Common myeloid progenitor, CD34-positive (primary cell): ENCODE measurements at regions of chr1 and their contacts with region 1.

Region 1: DNA sequence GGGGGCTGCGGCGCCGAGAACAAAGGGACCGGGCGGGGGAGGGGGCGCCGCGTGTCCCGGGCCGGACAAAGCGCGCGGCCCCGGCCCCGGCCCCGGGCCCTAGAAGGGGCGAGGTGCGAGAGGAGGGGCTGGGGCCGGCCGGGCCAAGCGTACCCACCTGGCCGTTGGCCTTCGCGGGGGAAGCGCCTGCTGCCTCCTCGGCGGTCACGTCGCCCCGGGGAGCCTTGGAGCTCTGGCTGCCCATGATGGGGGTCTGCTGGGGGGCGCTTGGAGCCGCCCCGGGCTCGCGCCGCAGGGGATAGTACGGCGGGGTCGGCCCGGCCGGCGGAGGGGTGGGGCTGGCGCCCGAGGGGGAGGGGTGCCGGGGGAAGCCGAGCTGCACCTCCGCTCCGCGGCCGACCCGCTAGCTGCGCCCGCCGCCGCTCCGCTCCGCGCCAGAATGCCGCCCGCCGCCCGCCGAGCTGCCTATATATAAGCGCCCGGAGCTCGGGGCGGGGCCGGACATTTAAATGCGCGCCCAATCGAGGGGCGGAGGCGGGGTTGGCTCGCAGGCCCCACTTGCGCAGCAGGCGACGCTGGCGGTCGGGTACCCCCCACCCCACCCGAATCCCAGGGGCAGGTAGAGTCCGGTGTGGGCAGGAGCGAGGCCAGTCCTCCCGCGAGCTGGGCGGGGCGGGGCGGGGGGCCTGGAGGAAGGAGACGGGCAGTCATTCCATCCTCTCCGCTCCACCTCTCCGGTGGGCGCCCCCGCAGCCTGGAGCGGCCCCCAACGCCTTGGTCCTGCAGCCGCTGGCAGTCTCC is at the start of gene MARCKSL1:
- DNase-seq: peak; percentile 72 to 83 (median 79)
- H3K4me3 ChIP-seq: peak within 1 kb of the TSS; percentile 33 to 80 (median 66)
- H3K27ac ChIP-seq: peak within 1 kb of the TSS in 1 of 2 experiments; percentile 20
- H3K4me1 ChIP-seq: peaks cover 0 to 54% (median 51%) of the 10 kb centered on the region in 4 experiments
- H3K27me3 ChIP-seq: peaks cover 0 to 5% (median 0%) of the 10 kb centered on the region in 5 experiments

Region 2: DNA sequence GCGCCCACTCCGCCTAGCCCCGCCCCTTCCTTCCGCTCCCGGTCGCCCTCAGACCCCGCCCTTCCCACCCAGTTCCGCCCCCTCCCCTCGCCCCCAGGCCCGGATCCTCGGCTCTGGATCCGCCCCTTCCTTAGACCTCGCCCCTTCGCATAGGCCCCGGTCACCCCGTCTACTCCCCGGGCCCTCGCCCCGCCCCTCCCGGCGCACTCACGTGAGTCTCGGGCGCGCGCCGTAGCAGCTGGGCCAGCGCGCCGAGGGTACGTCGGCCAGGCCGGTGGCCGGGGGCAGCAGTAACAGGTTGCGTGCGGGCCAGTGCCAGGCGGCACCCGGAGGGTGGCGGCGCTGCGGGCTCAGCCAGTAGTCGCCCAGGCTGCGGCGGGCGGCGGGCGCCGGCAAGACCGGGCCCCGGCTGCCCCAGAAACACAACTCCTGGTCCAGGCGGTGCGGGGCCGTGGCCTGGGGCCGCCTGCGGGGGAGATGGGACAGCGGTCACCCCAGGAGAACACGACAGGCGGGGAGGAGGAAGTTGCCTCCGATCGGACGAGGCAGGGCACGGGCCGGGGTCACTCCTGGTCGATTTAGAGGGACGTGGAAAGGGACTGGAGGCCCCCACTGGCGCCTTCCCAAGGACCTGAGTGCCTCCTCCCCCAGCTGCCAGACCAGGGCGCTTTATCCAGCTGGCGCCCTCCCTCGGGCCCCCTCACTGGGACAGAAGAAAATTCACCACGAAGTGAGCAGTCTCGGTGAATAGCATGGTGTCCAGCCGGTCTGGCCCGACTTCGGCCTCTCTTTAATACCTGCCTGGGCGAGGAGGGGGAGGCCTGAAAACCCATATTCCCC is 15.6 kb after region 1 on chr1:
- CTCF ChIA-PET with region 1: interaction called, 29 read pairs
- POLR2A ChIA-PET with region 1: interaction called, 27 read pairs
- DNase-seq: peak; percentile 92 to 96 (median 96)
- H3K4me3 ChIP-seq: peak overlapping the region; percentile 50 to 83 (median 66)
- H3K27ac ChIP-seq: peak overlapping the region in 1 of 2 experiments; percentile 73
- H3K4me1 ChIP-seq: peaks cover 7 to 53% (median 36%) of the 10 kb centered on the region in 4 experiments
- H3K27me3 ChIP-seq: no peaks in the 10 kb centered on the region

Region 3: GRCh38 chr1:32361674-32362473 is 25.9 kb after region 1 on chr1:
- CTCF ChIA-PET with region 1: interaction called, 9 read pairs
- POLR2A ChIA-PET with region 1: interaction called, 13 read pairs
- DNase-seq: peak; percentile 34 to 39 (median 34)
- H3K4me3 ChIP-seq: peak overlapping the region in 5 of 7 experiments; percentile 15 to 64 (median 54)
- H3K27ac ChIP-seq: no peak overlapping the region
- H3K4me1 ChIP-seq: peaks cover 3 to 18% (median 15%) of the 10 kb centered on the region in 4 experiments
- H3K27me3 ChIP-seq: peaks cover 0 to 14% (median 2%) of the 10 kb centered on the region in 5 experiments

Region 4: GRCh38 chr1:32372149-32372756 is 36.3 kb after region 1 on chr1:
- CTCF ChIA-PET with region 1: interaction called, 22 read pairs
- POLR2A ChIA-PET with region 1: interaction called, 23 read pairs
- DNase-seq: peak; percentile 74 to 94 (median 94)
- H3K4me3 ChIP-seq: no peak overlapping the region
- H3K27ac ChIP-seq: no peak overlapping the region
- H3K4me1 ChIP-seq: peaks cover 0 to 16% (median 10%) of the 10 kb centered on the region in 4 experiments
- H3K27me3 ChIP-seq: no peaks in the 10 kb centered on the region